ENCODE measurements at regions of chr3 and their contacts with region 1.

Region 1: DNA sequence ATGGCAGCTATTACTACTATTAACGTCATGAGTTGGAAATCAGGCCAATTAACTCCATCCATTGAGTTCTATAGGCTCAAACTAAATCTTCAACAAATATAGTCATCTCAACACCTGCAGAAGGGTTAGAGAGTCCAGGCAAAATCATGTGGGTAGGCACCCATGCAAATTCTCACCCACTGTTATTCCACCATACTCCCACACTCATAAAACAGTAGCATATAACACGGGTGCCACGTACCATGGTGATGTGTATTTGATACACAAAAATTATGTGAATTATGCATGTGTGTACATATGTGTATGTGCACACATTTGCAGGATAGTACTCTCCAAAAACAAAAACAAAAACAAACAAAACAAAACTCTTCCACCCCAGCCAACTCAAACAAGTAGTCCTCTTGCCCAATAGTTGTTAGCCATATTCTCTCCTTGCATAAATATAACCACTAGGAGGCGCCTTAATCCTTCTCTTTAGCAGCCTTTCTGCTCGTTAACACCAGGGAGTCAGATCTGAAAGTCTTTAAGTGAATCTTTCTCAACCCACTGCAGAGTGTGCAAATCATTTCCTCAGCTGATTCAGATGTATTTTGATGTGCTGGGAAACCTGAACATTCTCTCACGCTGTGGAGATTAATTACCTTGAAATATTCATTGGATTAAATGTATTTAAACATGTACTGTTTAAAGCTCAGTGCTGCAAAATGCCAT is 38.0 kb upstream of the COPB2 start:
- DNase-seq: no peak
- H3K4me3 Mint-ChIP-seq: no peak overlapping the region
- H3K27ac Mint-ChIP-seq: no peak overlapping the region
- H3K4me1 Mint-ChIP-seq: no peaks in the 10 kb centered on the region
- H3K27me3 Mint-ChIP-seq: no peaks in the 10 kb centered on the region

Region 2: DNA sequence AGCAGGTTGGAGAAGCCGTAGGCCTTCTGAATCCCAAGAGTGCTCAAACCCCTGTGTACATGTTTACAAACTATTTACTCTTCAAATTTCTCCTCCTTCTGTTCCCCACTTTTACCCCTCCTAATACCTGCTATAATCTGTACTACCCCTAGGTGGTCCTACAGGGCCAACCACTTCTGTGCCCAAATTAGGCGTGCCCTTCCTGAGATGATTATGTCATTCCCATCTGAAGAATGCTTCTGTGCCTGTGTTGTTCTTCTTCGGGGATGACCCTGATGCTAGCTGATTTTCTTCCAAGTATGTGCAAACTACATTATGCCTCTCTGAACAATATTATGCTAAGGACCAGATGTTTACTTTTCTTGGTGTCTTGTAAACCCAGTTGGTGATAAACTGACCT is 28.4 kb after region 1 on chr3:
- intact Hi-C with region 1: no loop called
- DNase-seq: no peak
- H3K4me3 Mint-ChIP-seq: no peak overlapping the region
- H3K27ac Mint-ChIP-seq: no peak overlapping the region
- H3K4me1 Mint-ChIP-seq: no peaks in the 10 kb centered on the region
- H3K27me3 Mint-ChIP-seq: no peaks in the 10 kb centered on the region

Region 3: GRCh38 chr3:139491027-139491700 is 63.7 kb after region 1 on chr3:
- intact Hi-C with region 1: no loop called
- DNase-seq: no peak
- H3K4me3 Mint-ChIP-seq: no peak overlapping the region
- H3K27ac Mint-ChIP-seq: no peak overlapping the region
- H3K4me1 Mint-ChIP-seq: no peaks in the 10 kb centered on the region
- H3K27me3 Mint-ChIP-seq: peaks cover 4% of the 10 kb centered on the region

Region 4: GRCh38 chr3:139519998-139520737 is 92.7 kb after region 1 on chr3:
- intact Hi-C with region 1: loop called (anchors 1 kb)
- DNase-seq: no peak
- H3K4me3 Mint-ChIP-seq: no peak overlapping the region
- H3K27ac Mint-ChIP-seq: no peak overlapping the region
- H3K4me1 Mint-ChIP-seq: no peaks in the 10 kb centered on the region
- H3K27me3 Mint-ChIP-seq: peaks cover 4% of the 10 kb centered on the region

Region 5: DNA sequence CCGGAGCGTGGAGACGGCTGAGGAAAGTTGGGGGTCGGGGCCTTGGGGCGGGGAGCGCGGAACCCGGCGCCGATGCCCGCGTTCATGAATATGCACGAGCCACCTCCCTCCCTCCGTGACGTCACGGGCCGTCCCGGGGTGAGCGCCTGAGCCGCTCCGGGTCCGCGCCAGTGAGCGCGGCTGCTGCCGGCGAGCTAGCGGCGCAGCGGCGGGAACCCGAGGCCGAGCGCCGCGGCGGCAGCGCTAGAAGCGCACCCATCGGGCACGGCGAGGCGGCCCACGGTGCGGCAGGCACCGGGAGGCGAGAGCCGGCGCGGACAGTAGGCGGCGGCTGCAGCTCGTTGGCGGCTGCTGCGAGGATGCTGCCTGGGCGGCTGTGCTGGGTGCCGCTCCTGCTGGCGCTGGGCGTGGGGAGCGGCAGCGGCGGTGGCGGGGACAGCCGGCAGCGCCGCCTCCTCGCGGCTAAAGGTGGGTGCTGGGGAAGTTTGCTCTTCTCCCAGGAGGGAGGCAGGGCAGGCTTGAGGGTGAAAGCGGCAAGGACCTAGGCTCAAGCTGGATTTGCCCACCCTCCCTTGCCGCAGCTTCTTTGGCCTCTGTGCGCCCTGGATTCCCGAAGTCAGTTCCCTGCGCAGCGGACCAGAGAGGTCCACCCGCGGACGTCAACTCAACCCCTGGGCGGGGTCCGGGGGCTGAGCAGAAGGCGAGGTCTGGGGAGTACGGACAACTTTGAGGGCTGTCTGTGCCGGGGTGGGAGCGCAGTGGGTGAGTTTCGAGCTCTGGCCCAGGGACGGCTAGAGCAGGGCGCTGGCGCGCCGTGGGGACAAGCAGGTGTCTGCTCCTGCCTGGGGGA is 507.8 kb after region 1 on chr3 and contains the start of gene CLSTN2:
- intact Hi-C with region 1: loop called (anchors 5 kb)
- DNase-seq: peak; percentile 11
- H3K4me3 Mint-ChIP-seq: no peak within 1 kb of the TSS
- H3K27ac Mint-ChIP-seq: no peak within 1 kb of the TSS
- H3K4me1 Mint-ChIP-seq: no peaks in the 10 kb centered on the region
- H3K27me3 Mint-ChIP-seq: peaks cover 52% of the 10 kb centered on the region
- total RNA-seq, gene CLSTN2: not detected in 2 replicates

Region 6: GRCh38 chr3:140863580-140864009 is 1436.2 kb after region 1 on chr3:
- intact Hi-C with region 1: loop called (anchors 2 kb)
- DNase-seq: peak; percentile 9
- H3K4me3 Mint-ChIP-seq: no peak overlapping the region
- H3K27ac Mint-ChIP-seq: no peak overlapping the region
- H3K4me1 Mint-ChIP-seq: no peaks in the 10 kb centered on the region
- H3K27me3 Mint-ChIP-seq: peaks cover 9% of the 10 kb centered on the region